ENCODE measurements at regions of chr10 and their contacts with region 1.

Region 1: GRCh38 chr10:19749185-19749729 is 67.0 kb upstream of the PLXDC2 start:
- DNase-seq: no peak
- ATAC-seq: no peak
- H3K4me3 ChIP-seq: no peak overlapping the region
- H3K27ac ChIP-seq: no peak overlapping the region
- H3K4me1 ChIP-seq: no peaks in the 10 kb centered on the region
- H3K27me3 ChIP-seq: no peaks in the 10 kb centered on the region

Region 2: GRCh38 chr10:19702215-19702614 is 47.0 kb before region 1 on chr10:
- intact Hi-C with region 1: loop called in 1 of 4 experiments (anchors 5 kb)
- DNase-seq: no peak
- ATAC-seq: no peak
- H3K4me3 ChIP-seq: no peak overlapping the region
- H3K27ac ChIP-seq: no peak overlapping the region
- H3K4me1 ChIP-seq: no peaks in the 10 kb centered on the region
- H3K27me3 ChIP-seq: no peaks in the 10 kb centered on the region

Region 3: DNA sequence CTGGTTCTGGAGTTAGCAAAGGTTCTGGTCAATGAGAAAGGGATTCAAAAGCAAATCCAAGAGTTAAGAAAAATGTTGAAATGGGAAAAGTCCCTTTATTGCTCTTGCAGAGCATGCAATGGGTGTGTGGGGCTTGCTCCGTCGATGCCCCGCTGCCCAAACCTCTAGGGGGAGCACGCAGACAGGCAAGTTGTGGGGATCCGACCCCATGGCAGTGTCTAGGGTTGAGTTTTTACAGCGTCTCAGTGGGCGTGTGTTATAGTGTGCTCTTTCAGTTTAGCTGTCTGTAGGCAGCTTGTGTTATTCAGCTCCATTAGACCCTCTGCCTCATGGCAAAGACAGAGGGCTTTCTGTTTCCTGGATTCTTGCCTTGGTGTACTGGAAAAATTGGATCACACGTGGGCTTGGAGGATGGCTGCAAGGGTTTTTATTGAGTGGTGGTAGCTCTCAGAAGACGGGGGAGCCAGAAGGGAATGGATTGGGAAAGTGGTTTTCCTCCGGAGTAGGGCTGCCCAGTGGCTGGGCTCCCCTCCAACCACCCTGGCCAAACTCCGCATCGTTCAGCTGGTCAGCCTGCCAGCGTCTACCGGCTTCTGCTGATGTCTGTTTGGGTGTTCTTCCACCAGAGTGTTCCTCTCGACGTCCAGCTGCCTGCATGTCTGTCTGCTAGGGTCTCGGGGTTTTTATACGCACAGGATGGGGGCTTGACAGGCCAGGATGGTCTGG is 35.3 kb before region 1 on chr10:
- intact Hi-C with region 1: no loop called
- DNase-seq: peak; percentile 37 to 69 (median 67)
- ATAC-seq: peak; percentile 45 to 53
- H3K4me3 ChIP-seq: no peak overlapping the region
- H3K27ac ChIP-seq: no peak overlapping the region
- H3K4me1 ChIP-seq: no peaks in the 10 kb centered on the region
- H3K27me3 ChIP-seq: no peaks in the 10 kb centered on the region

Region 4: DNA sequence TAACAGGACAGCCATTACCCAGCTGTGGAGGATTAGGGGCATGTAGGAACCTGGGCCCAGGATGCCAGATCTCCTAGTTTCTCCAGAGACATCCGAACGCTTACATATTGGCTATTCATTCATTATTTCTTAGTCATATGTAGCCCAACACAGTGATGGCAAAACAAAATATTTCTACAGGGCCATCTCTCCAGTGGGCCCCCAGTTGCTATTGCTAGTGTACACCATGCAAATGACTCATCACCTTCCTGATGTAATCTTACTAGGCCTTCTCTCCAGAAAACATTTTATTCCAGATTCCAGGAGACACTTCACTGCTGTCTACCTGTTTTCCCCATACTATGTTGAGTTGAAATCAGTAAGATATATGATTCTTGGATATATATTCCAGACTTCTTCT is 268.7 kb after region 1 on chr10:
- intact Hi-C with region 1: no loop called
- DNase-seq: no peak
- ATAC-seq: no peak
- H3K4me3 ChIP-seq: no peak overlapping the region
- H3K27ac ChIP-seq: no peak overlapping the region
- H3K4me1 ChIP-seq: no peaks in the 10 kb centered on the region
- H3K27me3 ChIP-seq: no peaks in the 10 kb centered on the region

Measured in right cardiac atrium (tissue), 5 donors.